MCF 10A (cell line): ENCODE measurements at regions of chr2 and their contacts with region 1.

Region 1: DNA sequence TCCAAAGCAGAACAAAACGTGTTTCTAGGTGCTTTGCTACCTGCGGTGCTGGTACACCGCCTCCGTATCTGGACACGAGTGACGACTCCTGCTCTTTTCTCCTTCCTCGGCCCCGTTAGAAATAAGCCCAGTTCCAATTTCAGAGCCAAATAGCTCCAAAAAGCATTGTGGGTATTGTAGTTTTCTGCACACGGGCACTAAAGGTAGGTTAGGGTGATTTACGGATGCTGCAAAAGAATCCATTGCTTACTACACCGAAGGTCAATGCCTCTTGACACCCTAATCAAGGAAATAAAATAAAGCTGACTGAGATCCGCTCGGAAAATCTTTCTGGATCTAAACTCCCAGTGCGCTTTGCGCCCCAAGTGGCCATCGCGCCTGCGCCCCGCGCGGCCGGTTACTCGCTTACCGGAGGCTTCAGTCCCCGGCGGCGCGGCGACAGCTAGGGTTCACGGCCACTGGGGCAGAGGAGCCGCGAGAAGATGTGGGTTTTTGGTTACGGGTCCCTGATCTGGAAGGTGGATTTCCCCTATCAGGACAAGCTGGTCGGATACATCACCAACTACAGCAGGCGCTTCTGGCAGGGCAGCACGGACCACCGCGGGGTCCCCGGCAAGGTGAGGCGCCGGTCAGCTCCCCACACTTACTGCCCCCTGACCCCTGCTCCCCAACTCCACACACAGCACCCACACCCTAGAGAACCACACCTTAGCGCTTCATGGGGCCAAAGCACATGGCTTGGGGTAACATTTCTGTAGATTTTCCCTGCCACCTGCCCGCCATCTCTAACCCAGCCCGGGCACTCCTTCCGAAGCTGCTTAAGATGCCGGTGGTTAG is at the start of gene CHAC2:
- DNase-seq: peak; percentile 84
- H3K4me3 Mint-ChIP-seq: peak within 1 kb of the TSS; percentile 88
- H3K27ac Mint-ChIP-seq: peak within 1 kb of the TSS; percentile 77
- H3K4me1 Mint-ChIP-seq: peaks cover 25% of the 10 kb centered on the region
- H3K27me3 Mint-ChIP-seq: no peaks in the 10 kb centered on the region
- CTCF ChIP-seq: no peak
- total RNA-seq, gene CHAC2: 7.4 and 10.5 TPM in 2 replicates

Region 2: GRCh38 chr2:53740170-53740569 is 27.5 kb before region 1 on chr2:
- CTCF ChIA-PET with region 1: no interaction called
- POLR2A ChIA-PET with region 1: interaction called, 12 read pairs
- intact Hi-C with region 1: no loop called
- DNase-seq: peak; percentile 26
- H3K4me3 Mint-ChIP-seq: no peak overlapping the region
- H3K27ac Mint-ChIP-seq: no peak overlapping the region
- H3K4me1 Mint-ChIP-seq: peaks cover 7% of the 10 kb centered on the region
- H3K27me3 Mint-ChIP-seq: no peaks in the 10 kb centered on the region
- CTCF ChIP-seq: peak; percentile 54

Region 3: DNA sequence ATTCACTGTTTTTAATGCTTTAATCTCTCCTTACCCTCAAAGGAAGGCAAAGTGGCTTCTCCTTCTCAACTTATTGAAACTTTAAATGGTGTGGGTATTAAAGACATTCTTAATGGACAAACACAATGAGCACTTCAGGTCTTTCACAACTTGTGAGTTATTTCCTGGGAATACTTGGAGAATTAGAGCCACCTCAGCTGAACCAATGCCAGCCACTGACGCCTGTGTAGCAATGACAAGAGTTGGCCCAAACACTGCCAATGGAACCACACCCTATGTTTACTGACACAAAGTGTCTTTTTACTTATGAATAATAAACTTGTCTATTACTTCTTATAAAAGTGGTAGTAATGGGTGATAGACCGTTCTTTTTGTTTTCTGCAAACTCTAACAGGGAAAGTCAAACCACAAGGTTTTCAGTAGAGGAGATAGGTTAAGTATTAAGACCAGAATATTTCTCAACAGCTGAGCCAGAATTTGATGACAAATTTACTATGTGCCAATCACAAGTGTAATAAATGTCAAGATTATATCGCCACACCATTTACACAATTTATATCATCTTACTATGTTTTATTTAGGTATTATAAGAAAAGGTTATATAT is 12.5 kb before region 1 on chr2:
- CTCF ChIA-PET with region 1: interaction called, 9 read pairs
- POLR2A ChIA-PET with region 1: interaction called, 27 read pairs
- intact Hi-C with region 1: no loop called
- DNase-seq: peak; percentile 82
- H3K4me3 Mint-ChIP-seq: no peak overlapping the region
- H3K27ac Mint-ChIP-seq: peak overlapping the region; percentile 89
- H3K4me1 Mint-ChIP-seq: peaks cover 25% of the 10 kb centered on the region
- H3K27me3 Mint-ChIP-seq: no peaks in the 10 kb centered on the region
- CTCF ChIP-seq: no peak

Region 4: GRCh38 chr2:53778536-53779162 is 11.0 kb after region 1 on chr2:
- CTCF ChIA-PET with region 1: interaction called, 3 read pairs
- POLR2A ChIA-PET with region 1: interaction called, 112 read pairs
- intact Hi-C with region 1: no loop called
- DNase-seq: no peak
- H3K4me3 Mint-ChIP-seq: no peak overlapping the region
- H3K27ac Mint-ChIP-seq: no peak overlapping the region
- H3K4me1 Mint-ChIP-seq: peaks cover 8% of the 10 kb centered on the region
- H3K27me3 Mint-ChIP-seq: no peaks in the 10 kb centered on the region
- CTCF ChIP-seq: no peak

Region 5: DNA sequence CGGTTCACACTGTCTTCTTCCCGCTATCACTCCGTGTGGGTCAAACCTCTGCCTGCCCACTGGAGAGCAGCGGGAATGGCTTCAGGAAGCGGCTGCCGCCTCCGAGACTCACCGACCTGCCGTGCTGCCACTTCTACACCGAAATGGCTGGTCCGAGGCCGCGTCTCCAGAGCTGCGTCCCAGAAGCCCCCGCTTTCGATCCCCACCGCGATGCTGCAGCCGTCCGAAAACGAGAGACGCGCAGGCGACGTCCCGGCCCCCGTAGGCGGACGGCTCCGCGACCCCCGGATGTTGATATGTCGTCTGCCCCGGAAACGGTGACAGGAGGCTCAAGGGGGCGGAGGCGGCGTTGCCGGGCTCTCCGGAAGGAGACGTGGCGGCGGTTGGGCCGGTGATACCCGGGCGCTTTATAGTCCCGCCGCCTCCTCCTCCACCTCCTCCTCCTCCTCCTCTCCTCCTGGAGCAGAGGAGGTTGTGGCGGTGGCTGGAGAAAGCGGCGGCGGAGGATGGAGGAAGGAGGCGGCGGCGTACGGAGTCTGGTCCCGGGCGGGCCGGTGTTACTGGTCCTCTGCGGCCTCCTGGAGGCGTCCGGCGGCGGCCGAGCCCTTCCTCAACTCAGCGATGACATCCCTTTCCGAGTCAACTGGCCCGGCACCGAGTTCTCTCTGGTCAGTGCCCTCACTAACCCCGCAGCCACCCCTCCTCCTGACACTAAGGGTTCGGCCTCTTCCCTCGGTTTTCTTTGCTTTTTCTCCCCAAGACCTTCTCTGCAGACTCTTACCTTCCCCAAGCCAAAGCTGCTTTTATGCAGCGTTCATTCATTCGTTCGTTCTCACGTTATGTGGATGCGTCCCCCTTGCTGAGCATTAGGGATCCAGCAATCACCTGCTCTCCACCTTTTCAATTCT is 19.3 kb after region 1 on chr2 and contains the starts of genes ASB3 and ERLEC1:
- CTCF ChIA-PET with region 1: interaction called, 11 read pairs
- POLR2A ChIA-PET with region 1: interaction called, 112 read pairs
- intact Hi-C with region 1: no loop called
- DNase-seq: peak; percentile 82
- H3K4me3 Mint-ChIP-seq: peak within 1 kb of the TSS; percentile 83
- H3K27ac Mint-ChIP-seq: peak within 1 kb of the TSS; percentile 62
- H3K4me1 Mint-ChIP-seq: peaks cover 12% of the 10 kb centered on the region
- H3K27me3 Mint-ChIP-seq: no peaks in the 10 kb centered on the region
- CTCF ChIP-seq: no peak
- total RNA-seq, gene ASB3: 19.7 and 20.3 TPM in 2 replicates
- total RNA-seq, gene ERLEC1: 51.4 and 68.1 TPM in 2 replicates